GM13976 (cell line): ENCODE measurements at regions of chr20 and their contacts with region 1.

Region 1: GRCh38 chr20:44683263-44684046 is 31.7 kb upstream of the CCN5 start:
- DNase-seq: peak; percentile 86
- CTCF ChIP-seq: peak; percentile 71

Region 2: DNA sequence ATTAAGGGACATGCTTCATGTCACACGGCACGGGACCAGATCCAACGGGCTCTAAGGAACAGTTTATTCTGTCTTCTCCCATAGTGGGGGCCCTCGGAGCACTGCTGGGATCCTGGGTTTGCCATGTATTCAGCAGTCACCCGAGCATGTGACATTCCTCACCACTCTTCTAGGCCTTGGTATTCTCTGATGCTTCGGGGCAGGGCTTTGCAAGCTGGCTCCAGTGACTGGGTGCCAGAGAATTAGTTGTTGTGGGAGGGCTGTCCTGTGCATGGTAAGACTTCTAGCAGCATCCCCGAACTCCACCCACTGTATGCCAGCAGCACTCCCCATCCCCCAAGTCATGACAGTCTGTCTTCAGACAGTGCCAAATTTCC is 37.1 kb after region 1 on chr20:
- in situ Hi-C with region 1: loop called (anchors 5 kb)
- DNase-seq: no peak
- CTCF ChIP-seq: no peak

Region 3: GRCh38 chr20:44861531-44862006 is 178.1 kb after region 1 on chr20:
- in situ Hi-C with region 1: loop called (anchors 10 kb)
- DNase-seq: no peak
- CTCF ChIP-seq: no peak